Activated T-helper 1 cell treated with anti-CD3 and anti-CD28 coated beads, Interleukin-12 subunit alpha, Interleukin-12 subunit beta, Interleukin-2, Interleukin-4 antibody, amounts not matched to agents 30 ng/mL and 10 ng/mL and 1 ng/mL, durations not matched to agents 14 hours and 24 hours and 36 hours (primary cell): ENCODE measurements at regions of chr15 and their contacts with region 1.

Region 1: GRCh38 chr15:73584699-73585420 is 48.3 kb downstream of the NPTN start:
- DNase-seq: no peak
- H3K4me3 Mint-ChIP-seq: no peak overlapping the region
- H3K27ac Mint-ChIP-seq: peak overlapping the region; percentile 60
- H3K4me1 Mint-ChIP-seq: peaks cover 65% of the 10 kb centered on the region
- H3K27me3 Mint-ChIP-seq: no peaks in the 10 kb centered on the region

Region 2: GRCh38 chr15:73442968-73443367 is 141.9 kb before region 1 on chr15 and contains the start of gene REC114:
- intact Hi-C with region 1: no loop called
- DNase-seq: no peak
- H3K4me3 Mint-ChIP-seq: no peak within 1 kb of the TSS
- H3K27ac Mint-ChIP-seq: no peak within 1 kb of the TSS
- H3K4me1 Mint-ChIP-seq: peaks cover 5% of the 10 kb centered on the region
- H3K27me3 Mint-ChIP-seq: peaks cover 8% of the 10 kb centered on the region
- total RNA-seq, gene REC114: not detected in 2 replicates

Region 3: GRCh38 chr15:73573572-73573971 is 11.3 kb before region 1 on chr15:
- intact Hi-C with region 1: loop called (anchors 1 kb)
- DNase-seq: no peak
- H3K4me3 Mint-ChIP-seq: no peak overlapping the region
- H3K27ac Mint-ChIP-seq: no peak overlapping the region
- H3K4me1 Mint-ChIP-seq: peaks cover 71% of the 10 kb centered on the region
- H3K27me3 Mint-ChIP-seq: no peaks in the 10 kb centered on the region

Region 4: DNA sequence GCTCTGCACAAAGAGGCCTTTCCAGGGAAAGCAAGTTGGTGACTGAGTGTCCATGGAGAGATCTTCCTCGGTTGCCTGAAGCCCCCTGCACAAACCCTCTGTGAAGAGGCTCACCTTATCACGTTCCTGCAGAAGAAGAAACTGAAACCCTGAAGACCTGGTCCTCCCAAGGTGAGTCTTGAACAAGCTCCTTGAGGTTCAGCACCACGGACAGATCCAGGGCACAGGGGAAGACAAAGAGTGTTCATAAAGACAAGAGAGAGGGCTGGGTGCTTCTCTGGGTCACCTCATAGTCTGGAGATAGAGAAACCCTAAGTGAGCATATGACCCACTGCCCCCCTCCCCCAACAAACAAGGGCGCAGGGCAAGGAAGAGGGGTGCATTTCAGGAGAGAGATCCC is 266.8 kb after region 1 on chr15:
- intact Hi-C with region 1: no loop called
- DNase-seq: peak; percentile 20
- H3K4me3 Mint-ChIP-seq: no peak overlapping the region
- H3K27ac Mint-ChIP-seq: no peak overlapping the region
- H3K4me1 Mint-ChIP-seq: no peaks in the 10 kb centered on the region
- H3K27me3 Mint-ChIP-seq: peaks cover 11% of the 10 kb centered on the region